Activated T-helper 2 cell treated with anti-CD3 and anti-CD28 coated beads, Interferon-gamma antibody, Interleukin-2, Interleukin-4, amounts not matched to agents 10 μg/mL and 5 μg/mL and 100 μg/mL, durations not matched to agents 14 hours and 24 hours and 36 hours (primary cell): ENCODE measurements at regions of chr21 and their contacts with region 1.

Region 1: DNA sequence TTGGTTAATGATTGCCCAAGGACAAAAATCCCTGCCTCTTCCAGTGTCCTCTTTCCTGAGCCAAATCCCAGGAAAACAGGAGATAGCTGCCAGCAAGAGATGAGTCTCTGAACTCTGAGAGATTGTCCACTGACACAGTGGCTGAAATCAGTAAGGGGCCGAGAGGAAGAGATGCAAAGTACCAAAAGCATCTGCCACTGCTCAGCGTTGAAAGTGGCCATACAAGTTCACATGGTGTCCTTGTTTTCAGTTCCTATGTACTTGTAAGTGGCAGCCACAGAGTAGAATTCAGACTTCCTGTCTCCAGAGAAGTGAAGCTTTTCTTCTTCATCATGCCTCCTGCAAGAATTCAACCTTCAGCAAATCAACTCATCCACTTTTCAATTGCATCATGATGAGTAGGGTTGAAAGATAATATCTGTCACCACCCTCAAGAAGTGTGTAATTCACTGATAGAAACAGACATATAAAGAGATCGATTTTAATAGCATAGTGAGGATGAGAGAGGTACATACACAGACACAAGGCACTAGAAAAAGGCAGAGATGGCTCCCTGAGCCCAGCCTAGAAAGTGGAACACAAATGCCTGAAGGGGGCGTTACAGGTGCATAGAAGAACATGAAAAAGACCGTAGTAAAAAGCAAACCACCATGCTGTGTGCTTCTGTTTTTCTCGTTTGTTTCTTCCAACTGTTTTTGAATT is 185.8 kb downstream of the MRPL39 start:
- DNase-seq: peak; percentile 59
- H3K4me3 Mint-ChIP-seq: peak overlapping the region; percentile 68
- H3K27ac Mint-ChIP-seq: peak overlapping the region; percentile 92
- H3K4me1 Mint-ChIP-seq: peaks cover 43% of the 10 kb centered on the region
- H3K27me3 Mint-ChIP-seq: no peaks in the 10 kb centered on the region

Region 2: DNA sequence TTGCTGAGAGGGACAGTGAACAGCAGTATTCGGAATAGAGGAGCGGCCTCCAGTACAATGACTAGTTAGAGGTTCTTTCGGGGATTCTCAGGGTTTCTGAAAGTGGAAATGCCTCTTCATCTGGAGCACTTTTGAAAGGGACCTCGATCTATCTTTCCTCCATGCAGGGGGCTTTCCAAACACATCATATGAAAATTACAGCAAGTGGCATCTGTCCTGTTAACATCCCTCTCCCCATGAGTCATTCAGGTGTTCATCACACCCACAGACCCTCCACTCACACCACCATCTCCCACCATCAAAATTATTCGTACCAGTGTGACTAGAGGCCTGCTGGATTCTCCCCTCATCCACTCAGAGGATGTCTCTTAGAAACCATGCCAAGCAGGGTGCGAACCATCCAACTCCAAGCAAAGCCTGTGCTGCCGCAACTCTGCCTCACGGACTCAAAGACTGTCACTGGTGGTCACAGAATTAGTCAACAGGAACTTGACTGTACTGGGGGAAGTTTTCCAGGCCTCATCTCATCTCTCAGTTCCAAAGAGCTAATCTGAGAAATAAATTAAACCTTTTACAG is 25.3 kb before region 1 on chr21:
- intact Hi-C with region 1: loop called (anchors 1 kb)
- DNase-seq: peak; percentile 48
- H3K4me3 Mint-ChIP-seq: peak overlapping the region; percentile 2
- H3K27ac Mint-ChIP-seq: peak overlapping the region; percentile 88
- H3K4me1 Mint-ChIP-seq: peaks cover 17% of the 10 kb centered on the region
- H3K27me3 Mint-ChIP-seq: no peaks in the 10 kb centered on the region

Region 3: DNA sequence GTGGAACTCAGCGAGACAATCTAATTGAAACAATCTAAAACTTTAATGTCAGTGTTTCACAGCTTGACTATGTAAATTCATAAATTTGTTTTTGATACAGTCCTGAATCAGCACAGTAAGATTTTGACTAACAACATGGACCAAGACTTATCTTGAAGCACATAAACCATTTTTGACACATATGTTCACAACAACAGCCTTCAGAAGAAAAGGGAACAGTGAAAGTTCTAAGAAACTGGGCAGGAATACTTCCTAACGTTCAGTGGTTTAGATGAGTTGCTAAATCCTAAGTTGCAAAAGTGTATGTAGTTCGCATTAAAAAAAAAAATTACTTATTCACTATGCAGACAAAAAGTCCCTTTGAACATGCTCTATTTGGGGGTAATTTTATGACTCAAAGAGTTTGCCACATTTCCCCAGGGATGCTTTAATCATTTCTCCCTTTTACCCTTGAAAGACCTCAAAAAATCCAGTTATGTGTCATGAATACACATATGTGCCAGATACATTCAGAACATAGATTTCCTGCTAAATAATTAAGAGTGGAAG is 65.6 kb after region 1 on chr21:
- intact Hi-C with region 1: loop called (anchors 1 kb)
- DNase-seq: no peak
- H3K4me3 Mint-ChIP-seq: peak overlapping the region; percentile 35
- H3K27ac Mint-ChIP-seq: peak overlapping the region; percentile 83
- H3K4me1 Mint-ChIP-seq: peaks cover 61% of the 10 kb centered on the region
- H3K27me3 Mint-ChIP-seq: no peaks in the 10 kb centered on the region

Region 4: DNA sequence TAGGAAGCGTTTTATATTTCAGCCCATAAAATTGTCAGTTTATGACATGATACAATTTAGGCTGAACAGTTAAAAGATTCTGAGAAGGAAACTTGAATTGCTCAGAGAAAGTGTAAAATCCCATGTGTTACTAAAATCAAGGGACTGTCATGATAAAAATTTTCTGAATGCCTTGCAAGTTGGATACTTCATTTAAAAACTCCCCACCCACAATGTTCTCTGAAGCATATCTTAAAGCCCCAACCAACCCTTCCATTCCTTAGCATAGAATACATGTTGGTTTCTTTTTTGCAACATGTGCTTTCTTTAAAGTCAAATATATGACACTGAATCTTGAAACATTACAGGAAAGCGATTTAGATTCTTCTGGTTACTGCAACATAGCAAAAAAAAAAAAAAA is 88.4 kb after region 1 on chr21:
- intact Hi-C with region 1: loop called (anchors 1 kb)
- DNase-seq: no peak
- H3K4me3 Mint-ChIP-seq: peak overlapping the region; percentile 27
- H3K27ac Mint-ChIP-seq: peak overlapping the region; percentile 63
- H3K4me1 Mint-ChIP-seq: peaks cover 51% of the 10 kb centered on the region
- H3K27me3 Mint-ChIP-seq: no peaks in the 10 kb centered on the region

Region 5: DNA sequence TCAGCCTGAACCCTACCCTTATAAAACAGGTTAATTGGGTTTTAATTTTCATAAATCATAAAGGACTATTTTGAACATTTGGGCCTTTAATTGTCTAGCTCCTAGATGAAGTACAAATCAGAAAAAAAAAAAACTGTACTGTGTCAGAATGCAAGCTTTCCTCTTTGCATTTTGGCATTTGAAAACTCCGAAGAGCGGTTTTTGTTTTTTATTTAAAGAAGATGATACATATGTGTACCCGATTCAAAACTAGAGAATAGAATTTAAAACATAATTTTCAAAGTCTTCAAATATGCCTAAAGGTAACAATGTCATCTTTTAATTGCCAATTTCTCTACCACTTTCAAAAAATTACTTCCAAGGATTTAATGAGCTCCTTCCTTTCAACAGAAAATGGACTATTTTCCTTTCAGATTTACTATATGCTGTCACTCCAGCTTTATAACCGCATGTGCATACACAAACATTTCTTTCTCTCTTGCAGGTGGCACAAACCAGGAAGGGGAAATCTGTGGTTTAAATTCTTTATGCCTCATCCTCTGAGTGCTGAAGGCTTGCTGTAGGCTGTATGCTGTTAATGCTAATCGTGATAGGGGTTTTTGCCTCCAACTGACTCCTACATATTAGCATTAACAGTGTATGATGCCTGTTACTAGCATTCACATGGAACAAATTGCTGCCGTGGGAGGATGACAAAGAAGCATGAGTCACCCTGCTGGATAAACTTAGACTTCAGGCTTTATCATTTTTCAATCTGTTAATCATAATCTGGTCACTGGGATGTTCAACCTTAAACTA is 152.1 kb after region 1 on chr21:
- intact Hi-C with region 1: loop called (anchors 1 kb)
- DNase-seq: peak; percentile 38
- H3K4me3 Mint-ChIP-seq: peak overlapping the region; percentile 77
- H3K27ac Mint-ChIP-seq: peak overlapping the region; percentile 93
- H3K4me1 Mint-ChIP-seq: peaks cover 76% of the 10 kb centered on the region
- H3K27me3 Mint-ChIP-seq: no peaks in the 10 kb centered on the region

Region 6: DNA sequence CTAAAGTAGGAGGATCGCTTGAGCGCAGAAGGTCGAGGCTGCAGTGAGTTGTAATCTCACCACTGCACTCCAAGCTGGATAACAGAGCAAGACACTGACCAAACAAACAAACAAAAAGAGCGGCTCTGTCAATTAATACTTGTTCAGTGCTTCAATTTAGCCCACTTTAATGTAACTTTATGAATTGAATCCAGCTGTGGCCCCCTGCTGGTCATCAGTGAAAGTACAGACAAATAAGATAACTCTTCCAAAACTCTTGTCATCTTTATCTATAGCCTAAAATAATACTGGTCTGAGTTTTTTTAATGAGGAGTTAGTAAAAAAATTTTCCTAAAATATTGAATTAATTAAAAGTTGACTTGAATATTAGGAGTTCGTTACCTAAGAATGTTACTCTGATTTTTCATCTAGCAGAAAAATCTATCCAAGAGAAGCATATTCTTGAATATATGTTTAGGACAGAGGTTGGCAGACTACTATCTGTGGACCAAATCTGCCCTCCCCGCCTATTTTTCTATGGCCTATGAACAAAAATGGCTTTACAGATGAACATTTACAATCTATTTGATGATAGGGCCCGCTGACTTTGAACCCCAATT is 287.1 kb after region 1 on chr21:
- intact Hi-C with region 1: loop called (anchors 5 kb)
- DNase-seq: peak; percentile 14
- H3K4me3 Mint-ChIP-seq: no peak overlapping the region
- H3K27ac Mint-ChIP-seq: no peak overlapping the region
- H3K4me1 Mint-ChIP-seq: peaks cover 1% of the 10 kb centered on the region
- H3K27me3 Mint-ChIP-seq: no peaks in the 10 kb centered on the region

Region 7: GRCh38 chr21:25801217-25802014 is 379.9 kb after region 1 on chr21:
- intact Hi-C with region 1: loop called (anchors 10 kb)
- DNase-seq: peak; percentile 85
- H3K4me3 Mint-ChIP-seq: no peak overlapping the region
- H3K27ac Mint-ChIP-seq: no peak overlapping the region
- H3K4me1 Mint-ChIP-seq: peaks cover 3% of the 10 kb centered on the region
- H3K27me3 Mint-ChIP-seq: peaks cover 13% of the 10 kb centered on the region